Common myeloid progenitor, CD34-positive (primary cell): ENCODE measurements at regions of chr19 and their contacts with region 1.

Region 1: DNA sequence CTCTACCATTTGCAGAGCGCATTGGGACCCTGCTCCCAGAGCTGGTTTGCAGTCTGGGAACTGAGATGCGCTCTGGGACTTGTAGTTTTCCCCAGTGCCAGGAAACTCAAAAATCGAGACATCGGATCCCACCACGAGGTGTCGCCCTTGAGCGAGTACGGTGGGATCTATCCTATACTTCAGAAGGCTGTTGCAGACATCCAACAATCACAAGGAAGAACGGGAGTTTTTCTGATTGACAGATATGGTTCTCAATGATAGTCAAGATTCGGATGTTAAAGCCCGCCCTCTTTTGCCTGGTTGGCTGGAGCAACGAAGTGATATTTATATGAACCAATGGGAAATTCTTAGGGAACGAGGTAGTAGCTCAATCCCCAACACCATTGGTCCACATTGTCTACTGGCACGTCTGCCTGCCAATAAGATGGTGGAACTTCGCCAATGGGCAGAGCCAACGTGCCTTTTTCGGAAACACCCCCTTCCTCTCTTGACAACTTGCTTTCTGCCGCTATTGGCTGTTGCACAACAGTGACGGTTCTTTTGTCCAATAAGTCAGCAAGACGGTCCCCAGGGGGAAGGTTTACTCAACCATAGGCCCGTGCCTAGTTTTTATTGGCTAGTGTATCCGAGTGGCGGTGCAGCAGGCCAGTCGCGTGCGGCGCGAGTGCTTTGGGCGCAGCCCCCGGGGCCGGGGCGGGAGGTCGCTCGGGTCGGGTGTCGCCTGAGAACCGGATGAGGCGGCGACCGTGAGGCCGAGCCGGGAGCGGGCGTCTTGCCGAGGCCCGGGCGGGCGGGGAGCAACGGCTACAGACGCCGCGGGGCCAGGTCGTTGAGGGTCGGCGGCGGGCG is at the start of gene DNM2:
- DNase-seq: peak; percentile 100
- H3K4me3 ChIP-seq: peak within 1 kb of the TSS; percentile 81 to 98 (median 96)
- H3K27ac ChIP-seq: peak within 1 kb of the TSS; percentile 75 to 87
- H3K4me1 ChIP-seq: peaks cover 0 to 28% (median 24%) of the 10 kb centered on the region in 4 experiments
- H3K27me3 ChIP-seq: no peaks in the 10 kb centered on the region

Region 2: DNA sequence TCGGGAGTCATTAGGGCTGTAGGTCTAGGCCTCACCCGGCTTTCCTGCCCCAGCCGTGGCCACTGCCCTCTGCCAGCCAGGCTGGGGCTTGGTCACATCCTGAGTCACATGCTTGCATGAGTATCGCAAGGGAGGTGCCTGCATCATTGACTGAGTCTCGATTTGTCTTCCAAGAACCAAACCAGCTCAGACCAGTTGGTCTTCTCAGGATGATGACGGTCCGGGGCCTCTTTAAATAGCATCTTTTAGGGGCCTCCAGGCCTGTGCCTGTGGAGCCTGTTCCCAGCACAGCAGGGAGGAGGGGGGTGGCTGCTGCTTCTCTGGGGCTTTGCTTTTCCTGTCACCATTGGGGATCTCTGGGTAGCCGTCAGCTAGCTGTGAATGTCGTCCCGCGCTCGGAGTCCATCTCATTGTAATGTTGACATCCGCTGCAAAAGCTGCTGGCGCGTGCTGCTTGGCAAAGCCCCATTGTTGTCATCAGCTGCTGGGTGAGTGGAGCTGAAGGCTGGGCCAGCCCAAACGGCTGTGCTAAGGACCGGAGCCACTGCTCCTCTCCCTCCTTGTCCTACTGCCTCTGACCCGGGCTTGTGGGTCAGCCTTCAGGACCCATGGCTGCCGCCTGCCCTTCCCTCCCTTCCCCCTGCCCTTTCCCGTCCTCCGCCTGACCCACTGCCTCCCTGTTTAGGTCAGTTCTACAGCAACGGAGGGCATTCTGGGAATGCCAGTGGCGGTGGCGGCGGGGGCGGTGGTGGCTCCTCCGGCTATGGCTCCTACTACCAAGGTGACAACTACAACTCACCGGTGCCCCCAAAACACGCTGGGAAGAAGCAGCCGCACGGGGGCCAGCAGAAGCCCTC is 30.7 kb before region 1 on chr19:
- CTCF ChIA-PET with region 1: no interaction called
- POLR2A ChIA-PET with region 1: no interaction called
- DNase-seq: no peak
- H3K4me3 ChIP-seq: no peak overlapping the region
- H3K27ac ChIP-seq: no peak overlapping the region
- H3K4me1 ChIP-seq: no peaks in the 10 kb centered on the region
- H3K27me3 ChIP-seq: no peaks in the 10 kb centered on the region

Region 3: GRCh38 chr19:10699650-10700335 is 17.8 kb before region 1 on chr19:
- CTCF ChIA-PET with region 1: interaction called, 69 read pairs
- POLR2A ChIA-PET with region 1: no interaction called
- DNase-seq: peak; percentile 71 to 87 (median 83)
- H3K4me3 ChIP-seq: no peak overlapping the region
- H3K27ac ChIP-seq: no peak overlapping the region
- H3K4me1 ChIP-seq: peaks cover 0 to 27% (median 22%) of the 10 kb centered on the region in 4 experiments
- H3K27me3 ChIP-seq: peaks cover 0 to 6% (median 0%) of the 10 kb centered on the region in 5 experiments

Region 4: GRCh38 chr19:10730923-10731322 is 13.3 kb after region 1 on chr19:
- CTCF ChIA-PET with region 1: interaction called, 14 read pairs
- POLR2A ChIA-PET with region 1: interaction called, 5 read pairs
- DNase-seq: peak in 1 of 3 donors; percentile 17
- H3K4me3 ChIP-seq: no peak overlapping the region
- H3K27ac ChIP-seq: peak overlapping the region in 1 of 2 experiments; percentile 34
- H3K4me1 ChIP-seq: peaks cover 0 to 26% (median 19%) of the 10 kb centered on the region in 4 experiments
- H3K27me3 ChIP-seq: no peaks in the 10 kb centered on the region

Region 5: DNA sequence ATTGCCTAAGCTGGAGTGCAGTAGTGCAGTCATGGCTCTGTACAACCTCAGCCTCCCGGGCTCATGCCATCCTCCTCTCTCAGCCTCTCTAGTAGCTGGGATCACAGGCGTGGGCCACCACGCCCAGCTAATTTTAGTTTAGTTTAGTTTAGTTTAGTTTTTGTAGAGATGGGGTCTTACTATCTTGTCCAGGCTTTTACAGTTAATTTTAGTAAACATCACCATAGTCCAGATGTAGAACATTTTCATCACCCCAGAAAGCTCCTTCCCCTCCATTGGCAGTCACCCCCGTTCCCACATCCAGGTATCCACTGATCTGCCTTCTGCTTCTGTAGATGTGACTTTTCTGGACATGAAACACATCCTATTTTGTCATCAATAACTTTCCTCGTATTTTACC is 41.4 kb after region 1 on chr19:
- CTCF ChIA-PET with region 1: interaction called, 10 read pairs
- POLR2A ChIA-PET with region 1: interaction called, 5 read pairs
- DNase-seq: no peak
- H3K4me3 ChIP-seq: peak overlapping the region in 4 of 7 experiments; percentile 40 to 55 (median 47)
- H3K27ac ChIP-seq: peak overlapping the region in 1 of 2 experiments; percentile 75
- H3K4me1 ChIP-seq: peaks cover 10 to 45% (median 25%) of the 10 kb centered on the region in 4 experiments
- H3K27me3 ChIP-seq: no peaks in the 10 kb centered on the region

Region 6: DNA sequence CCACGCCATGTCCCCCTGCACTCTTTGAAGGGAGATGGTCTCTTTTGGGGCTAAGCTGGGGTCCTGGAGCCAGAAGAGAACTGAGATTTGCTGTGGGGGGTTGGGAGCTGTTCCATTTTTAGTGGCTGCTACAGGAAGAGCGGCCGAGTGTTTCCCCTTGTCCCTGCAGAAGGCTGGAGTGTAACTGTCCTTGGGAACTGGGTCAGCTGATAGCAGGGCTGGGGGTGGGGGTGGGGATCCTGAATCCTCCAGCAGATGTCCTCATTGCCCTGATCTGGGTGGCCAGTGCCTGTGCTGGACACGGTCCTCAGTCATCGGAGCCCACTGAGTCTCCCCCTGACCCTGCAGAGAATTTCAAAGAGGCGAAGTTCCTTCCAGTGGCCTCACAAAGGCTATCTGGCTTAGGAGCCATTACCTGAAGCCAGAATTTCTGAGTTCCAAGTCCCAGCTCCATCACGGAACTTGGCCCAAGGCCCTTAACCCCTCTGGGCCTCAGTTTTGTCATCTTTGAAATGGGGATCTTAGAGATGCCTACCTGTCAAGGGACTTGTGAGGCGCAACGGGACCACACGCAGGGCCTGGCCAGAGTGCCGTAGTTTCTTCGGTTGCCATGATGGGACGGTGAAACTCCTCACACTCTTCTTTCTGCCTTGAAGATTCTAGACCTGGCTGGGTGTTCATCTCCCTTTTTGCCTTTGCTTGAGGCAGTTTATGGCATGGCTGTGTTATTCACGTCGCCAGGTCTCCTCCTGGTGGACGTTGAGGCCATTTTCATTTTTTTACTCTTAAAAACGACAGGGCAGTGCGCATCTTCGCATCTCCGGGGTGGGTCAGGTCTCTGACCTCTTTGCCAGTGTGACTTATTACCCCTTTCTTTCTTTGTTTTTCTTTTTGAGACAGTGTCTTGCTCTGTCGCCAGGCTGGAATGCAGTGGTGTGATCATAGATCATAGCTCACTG is 52.2 kb after region 1 on chr19:
- CTCF ChIA-PET with region 1: interaction called, 10 read pairs
- POLR2A ChIA-PET with region 1: interaction called, 4 read pairs
- DNase-seq: peak in 2 of 3 donors; percentile 39 to 50
- H3K4me3 ChIP-seq: no peak overlapping the region
- H3K27ac ChIP-seq: no peak overlapping the region
- H3K4me1 ChIP-seq: no peaks in the 10 kb centered on the region
- H3K27me3 ChIP-seq: no peaks in the 10 kb centered on the region

Region 7: DNA sequence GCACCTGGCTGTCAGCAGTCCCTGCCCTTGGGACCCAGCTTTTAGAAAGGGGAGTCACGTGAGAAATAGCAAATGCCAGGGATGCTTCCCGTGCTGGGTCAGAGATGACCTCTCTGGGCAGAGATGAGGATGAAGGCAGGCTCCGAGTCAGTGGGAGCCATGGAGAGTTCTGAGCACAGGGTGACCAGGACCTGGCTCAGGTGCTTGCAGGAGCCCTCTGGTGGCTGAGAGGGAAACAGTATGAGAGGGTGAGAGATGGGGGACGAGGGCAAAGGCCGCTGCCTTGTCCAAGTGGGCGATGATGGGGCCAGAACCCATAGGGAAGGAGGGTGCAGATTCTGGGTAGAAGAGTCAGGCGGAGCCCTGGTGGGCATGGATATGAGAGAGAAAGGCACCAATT is 102.6 kb after region 1 on chr19:
- CTCF ChIA-PET with region 1: interaction called, 10 read pairs
- POLR2A ChIA-PET with region 1: interaction called, 5 read pairs
- DNase-seq: no peak
- H3K4me3 ChIP-seq: no peak overlapping the region
- H3K27ac ChIP-seq: no peak overlapping the region
- H3K4me1 ChIP-seq: peaks cover 0 to 10% (median 4%) of the 10 kb centered on the region in 4 experiments
- H3K27me3 ChIP-seq: no peaks in the 10 kb centered on the region

Region 8: GRCh38 chr19:10864538-10864899 is 146.9 kb after region 1 on chr19:
- CTCF ChIA-PET with region 1: interaction called, 10 read pairs
- POLR2A ChIA-PET with region 1: interaction called, 3 read pairs
- DNase-seq: peak; percentile 66 to 77 (median 71)
- H3K4me3 ChIP-seq: peak overlapping the region in 1 of 7 experiments; percentile 40
- H3K27ac ChIP-seq: no peak overlapping the region
- H3K4me1 ChIP-seq: peaks cover 0 to 4% (median 3%) of the 10 kb centered on the region in 4 experiments
- H3K27me3 ChIP-seq: no peaks in the 10 kb centered on the region